Activated CD8-positive, alpha-beta T cell treated with anti-CD3 and anti-CD28 coated beads, Interleukin-2, amount 10 ng/mL, durations not matched to agents 7 days and 5 days (primary cell): ENCODE measurements at regions of chr17 and their contacts with region 1.

Region 1: GRCh38 chr17:3827124-3827773 is 18.8 kb downstream of the NCBP3 start:
- DNase-seq: peak; percentile 83
- ATAC-seq: no peak
- H3K4me3 Mint-ChIP-seq: no peak overlapping the region
- H3K27ac Mint-ChIP-seq: no peak overlapping the region
- H3K4me1 Mint-ChIP-seq: peaks cover 9% of the 10 kb centered on the region
- H3K27me3 Mint-ChIP-seq: no peaks in the 10 kb centered on the region

Region 2: DNA sequence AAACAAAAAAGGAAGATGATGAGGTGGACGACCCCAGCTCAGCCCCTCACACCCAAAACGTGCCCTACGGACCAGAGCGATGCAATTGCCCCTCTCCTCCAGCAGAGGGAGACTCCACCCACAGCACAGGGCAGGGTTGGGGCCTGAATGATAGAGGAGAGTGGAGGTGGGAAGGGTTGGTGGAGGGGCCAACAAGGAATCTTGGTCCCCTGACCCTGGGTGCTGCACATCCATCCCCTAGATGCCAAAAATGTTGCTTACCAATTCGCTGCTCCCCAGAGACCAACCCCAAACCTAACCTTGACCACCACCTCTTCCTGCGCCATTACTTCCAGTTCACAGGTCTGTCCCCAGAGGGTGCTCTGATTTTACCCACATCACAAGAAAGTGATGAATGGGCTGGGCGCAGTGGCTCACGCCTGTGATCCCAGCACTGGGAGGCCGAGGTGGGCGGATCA is 144.2 kb before region 1 on chr17:
- CTCF ChIA-PET with region 1: interaction called, 22 read pairs
- POLR2A ChIA-PET with region 1: no interaction called
- DNase-seq: peak; percentile 74
- ATAC-seq: peak; percentile 90
- H3K4me3 Mint-ChIP-seq: no peak overlapping the region
- H3K27ac Mint-ChIP-seq: no peak overlapping the region
- H3K4me1 Mint-ChIP-seq: peaks cover 25% of the 10 kb centered on the region
- H3K27me3 Mint-ChIP-seq: no peaks in the 10 kb centered on the region

Region 3: DNA sequence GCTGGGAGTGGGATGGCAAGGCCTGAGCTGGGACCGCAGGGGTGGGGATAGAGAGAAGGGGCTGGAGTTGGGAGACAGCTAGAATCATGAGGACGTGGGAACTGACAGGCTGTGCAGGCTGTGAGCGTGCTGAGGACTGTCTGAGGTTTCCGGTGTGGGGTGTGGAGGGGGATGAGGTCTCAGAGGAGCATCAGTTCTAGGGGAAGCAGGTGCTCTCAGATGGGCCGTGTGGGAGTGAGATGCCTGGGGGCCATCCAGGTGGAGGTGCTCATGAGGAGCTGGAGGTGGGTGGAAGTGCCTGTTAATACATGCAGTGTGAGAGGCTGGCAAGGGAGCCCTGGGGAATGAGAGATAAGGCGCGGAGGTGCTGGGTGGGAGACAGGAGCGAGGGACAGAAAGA is 76.3 kb before region 1 on chr17:
- CTCF ChIA-PET with region 1: interaction called, 16 read pairs
- POLR2A ChIA-PET with region 1: no interaction called
- DNase-seq: peak; percentile 83
- ATAC-seq: peak; percentile 87
- H3K4me3 Mint-ChIP-seq: peak overlapping the region; percentile 54
- H3K27ac Mint-ChIP-seq: peak overlapping the region; percentile 86
- H3K4me1 Mint-ChIP-seq: peaks cover 55% of the 10 kb centered on the region
- H3K27me3 Mint-ChIP-seq: peaks cover 5% of the 10 kb centered on the region

Region 4: DNA sequence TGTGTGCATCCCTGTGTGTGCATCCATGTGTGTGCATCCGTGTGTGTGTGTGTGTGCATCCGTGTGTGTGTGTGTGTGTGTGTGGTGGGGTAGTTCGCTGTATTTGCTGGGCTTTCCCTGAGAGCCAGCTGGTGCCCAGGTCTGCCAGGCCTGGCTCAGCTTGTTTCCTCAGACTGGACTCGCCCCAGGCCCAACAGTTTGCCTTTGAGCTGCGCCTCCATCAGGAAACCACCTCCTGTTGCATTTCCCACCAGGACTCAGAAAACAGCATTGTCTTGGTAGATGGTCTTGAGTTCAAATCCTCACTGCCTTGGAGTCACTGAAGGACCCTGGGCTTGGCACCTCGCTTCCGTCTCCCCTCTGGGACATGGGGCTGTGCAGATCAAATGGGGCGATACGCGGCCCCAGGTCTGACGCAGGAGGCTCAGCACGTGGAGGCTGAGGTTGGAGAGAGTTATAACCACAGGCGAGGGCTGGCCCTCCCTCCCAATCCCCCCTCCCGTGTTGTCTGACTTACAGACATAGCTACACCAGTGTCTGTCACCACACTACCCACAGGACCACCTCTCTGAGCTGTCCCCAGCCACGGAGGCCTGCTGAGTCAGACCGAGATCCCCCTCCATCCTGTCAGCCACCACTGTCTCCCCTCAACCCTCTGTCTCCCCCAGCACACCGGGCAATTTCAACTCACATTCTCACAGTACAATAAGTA is 31.0 kb before region 1 on chr17:
- CTCF ChIA-PET with region 1: interaction called, 14 read pairs
- POLR2A ChIA-PET with region 1: no interaction called
- DNase-seq: peak; percentile 96
- ATAC-seq: peak; percentile 81
- H3K4me3 Mint-ChIP-seq: peak overlapping the region; percentile 34
- H3K27ac Mint-ChIP-seq: peak overlapping the region; percentile 70
- H3K4me1 Mint-ChIP-seq: peaks cover 82% of the 10 kb centered on the region
- H3K27me3 Mint-ChIP-seq: peaks cover 6% of the 10 kb centered on the region

Region 5: GRCh38 chr17:3812771-3813170 is 14.5 kb before region 1 on chr17:
- CTCF ChIA-PET with region 1: interaction called, 38 read pairs
- POLR2A ChIA-PET with region 1: interaction called, 3 read pairs
- DNase-seq: no peak
- ATAC-seq: no peak
- H3K4me3 Mint-ChIP-seq: no peak overlapping the region
- H3K27ac Mint-ChIP-seq: no peak overlapping the region
- H3K4me1 Mint-ChIP-seq: peaks cover 11% of the 10 kb centered on the region
- H3K27me3 Mint-ChIP-seq: no peaks in the 10 kb centered on the region

Region 6: DNA sequence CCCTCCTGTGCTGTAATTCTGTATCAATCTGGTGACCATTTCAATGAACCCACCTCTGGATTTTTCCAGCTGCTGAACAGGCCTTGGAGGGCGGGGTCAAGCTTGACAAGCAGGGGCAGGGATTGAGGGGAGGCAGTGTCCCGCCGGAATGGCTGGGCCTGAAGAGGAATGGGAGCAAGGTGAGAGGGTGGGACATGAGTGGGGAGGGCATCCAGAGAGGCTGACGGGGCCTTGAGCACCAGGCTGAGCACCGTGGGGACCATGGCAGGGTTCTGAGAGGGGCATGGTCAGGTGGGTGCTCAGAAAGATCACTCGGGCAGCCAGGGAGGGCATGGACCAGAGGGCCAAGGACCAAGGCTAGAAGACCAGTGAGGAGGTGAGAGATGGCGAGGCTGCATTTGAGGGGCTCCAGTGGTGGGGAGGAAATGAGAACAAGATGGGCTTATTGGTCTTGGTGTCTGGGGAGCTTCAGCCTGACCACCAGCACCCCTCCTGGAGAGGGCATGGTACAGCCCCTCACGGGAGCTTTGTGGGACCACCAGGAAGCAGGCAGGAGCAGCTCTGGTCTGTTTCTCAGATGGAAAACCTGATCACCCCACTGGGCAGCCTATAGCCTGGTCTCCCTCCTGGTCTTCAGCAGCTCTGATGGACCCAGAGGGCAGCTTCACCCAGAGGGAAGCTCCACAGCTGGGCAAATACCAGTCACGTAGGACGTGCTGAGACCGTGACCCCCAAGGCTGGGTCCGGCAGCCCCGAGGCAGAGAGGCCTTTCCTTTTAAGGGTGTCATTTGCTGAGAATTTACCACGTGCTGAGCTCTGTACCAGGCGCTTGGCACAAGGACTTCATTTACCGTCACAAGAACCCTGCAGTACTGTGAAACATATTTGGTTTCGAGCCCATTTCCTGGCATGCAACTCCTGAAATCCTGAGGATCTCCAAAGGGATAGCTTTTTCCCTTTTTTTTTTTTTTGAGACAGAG is 30.2 kb after region 1 on chr17:
- CTCF ChIA-PET with region 1: no interaction called
- POLR2A ChIA-PET with region 1: no interaction called
- DNase-seq: no peak
- ATAC-seq: no peak
- H3K4me3 Mint-ChIP-seq: no peak overlapping the region
- H3K27ac Mint-ChIP-seq: no peak overlapping the region
- H3K4me1 Mint-ChIP-seq: no peaks in the 10 kb centered on the region
- H3K27me3 Mint-ChIP-seq: no peaks in the 10 kb centered on the region